ENCODE measurements at regions of chr11 and their contacts with region 1.

Region 1: DNA sequence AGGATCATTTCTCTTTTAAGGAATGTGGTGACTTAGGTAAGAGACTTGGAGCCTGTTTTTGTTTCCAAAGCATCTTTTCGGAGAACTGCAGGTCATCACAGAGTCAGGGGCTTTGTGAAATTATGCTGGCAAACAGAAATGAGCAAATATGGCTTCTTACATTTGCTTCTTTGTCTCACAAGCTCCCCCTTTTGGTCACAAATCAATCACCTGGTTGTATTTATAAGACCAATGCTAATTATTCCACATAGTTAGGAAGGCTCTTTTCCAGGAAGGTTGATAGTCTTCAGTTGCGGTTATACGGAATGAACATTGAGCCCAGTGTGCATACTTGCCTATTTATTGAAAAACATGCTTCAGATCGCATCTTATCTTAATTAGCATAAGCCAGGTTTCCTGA is 34.6 kb upstream of the CEP126 start:
- DNase-seq: no peak
- H3K4me3 ChIP-seq: no peak overlapping the region
- H3K27ac ChIP-seq: no peak overlapping the region
- H3K4me1 ChIP-seq: no peaks in the 10 kb centered on the region
- H3K27me3 ChIP-seq: no peaks in the 10 kb centered on the region
- CTCF ChIP-seq: peak in 1 of 3 experiments; percentile 41
- EP300 ChIP-seq: no peak
- POLR2A ChIP-seq: no peak

Region 2: GRCh38 chr11:101835506-101836063 is 44.6 kb before region 1 on chr11:
- intact Hi-C with region 1: no loop called
- DNase-seq: no peak
- H3K4me3 ChIP-seq: no peak overlapping the region
- H3K27ac ChIP-seq: no peak overlapping the region
- H3K4me1 ChIP-seq: no peaks in the 10 kb centered on the region
- H3K27me3 ChIP-seq: no peaks in the 10 kb centered on the region
- CTCF ChIP-seq: no peak
- EP300 ChIP-seq: no peak
- POLR2A ChIP-seq: no peak

Region 3: DNA sequence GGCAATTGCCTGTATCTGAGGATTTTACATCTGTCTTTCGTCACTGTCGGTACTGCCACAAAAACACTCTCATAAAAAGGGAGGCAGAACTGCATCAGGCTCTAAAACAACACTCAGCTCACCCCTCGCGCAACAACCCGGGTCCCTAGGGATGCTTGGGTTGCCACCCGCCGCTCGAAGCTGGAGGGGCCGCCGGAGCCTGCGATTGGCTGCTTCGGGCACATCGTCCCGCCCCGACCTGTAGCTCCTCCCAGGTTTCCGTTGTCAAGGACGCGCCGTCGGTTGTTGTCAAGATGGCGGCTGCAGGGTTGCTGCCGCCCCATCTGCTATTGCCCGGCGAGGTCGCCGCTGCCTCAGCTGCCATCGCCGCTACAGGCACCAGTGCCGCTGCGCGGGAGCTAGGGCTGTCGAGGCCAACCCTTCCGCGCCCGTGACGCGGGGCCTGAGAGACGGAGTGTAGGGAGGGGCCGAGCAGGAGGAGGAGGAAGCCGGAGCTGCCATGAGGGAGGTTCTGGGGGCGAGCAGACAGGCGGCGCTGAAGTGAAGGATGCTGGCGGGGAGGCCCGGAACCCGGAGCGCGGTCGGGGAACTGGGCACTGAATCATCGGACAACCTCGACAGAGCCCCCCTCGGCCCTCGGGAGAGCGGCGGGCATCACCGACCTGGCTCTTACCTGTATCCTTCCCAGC is 34.7 kb after region 1 on chr11 and contains the start of gene CEP126:
- intact Hi-C with region 1: loop called (anchors 5 kb)
- DNase-seq: peak; percentile 98
- H3K4me3 ChIP-seq: peak within 1 kb of the TSS; percentile 67 to 93 (median 79)
- H3K27ac ChIP-seq: peak within 1 kb of the TSS; percentile 86 to 91 (median 87)
- H3K4me1 ChIP-seq: peaks cover 11 to 38% (median 34%) of the 10 kb centered on the region in 4 donors
- H3K27me3 ChIP-seq: no peaks in the 10 kb centered on the region
- CTCF ChIP-seq: peak; percentile 46 to 57 (median 54)
- EP300 ChIP-seq: no peak
- POLR2A ChIP-seq: no peak
- total RNA-seq, gene CEP126: 6.6 to 11.3 (median 10.1) TPM

Measured in esophagus muscularis mucosa (tissue), 4 donors.